ENCODE measurements at regions of chr15 and their contacts with region 1.

Region 1: DNA sequence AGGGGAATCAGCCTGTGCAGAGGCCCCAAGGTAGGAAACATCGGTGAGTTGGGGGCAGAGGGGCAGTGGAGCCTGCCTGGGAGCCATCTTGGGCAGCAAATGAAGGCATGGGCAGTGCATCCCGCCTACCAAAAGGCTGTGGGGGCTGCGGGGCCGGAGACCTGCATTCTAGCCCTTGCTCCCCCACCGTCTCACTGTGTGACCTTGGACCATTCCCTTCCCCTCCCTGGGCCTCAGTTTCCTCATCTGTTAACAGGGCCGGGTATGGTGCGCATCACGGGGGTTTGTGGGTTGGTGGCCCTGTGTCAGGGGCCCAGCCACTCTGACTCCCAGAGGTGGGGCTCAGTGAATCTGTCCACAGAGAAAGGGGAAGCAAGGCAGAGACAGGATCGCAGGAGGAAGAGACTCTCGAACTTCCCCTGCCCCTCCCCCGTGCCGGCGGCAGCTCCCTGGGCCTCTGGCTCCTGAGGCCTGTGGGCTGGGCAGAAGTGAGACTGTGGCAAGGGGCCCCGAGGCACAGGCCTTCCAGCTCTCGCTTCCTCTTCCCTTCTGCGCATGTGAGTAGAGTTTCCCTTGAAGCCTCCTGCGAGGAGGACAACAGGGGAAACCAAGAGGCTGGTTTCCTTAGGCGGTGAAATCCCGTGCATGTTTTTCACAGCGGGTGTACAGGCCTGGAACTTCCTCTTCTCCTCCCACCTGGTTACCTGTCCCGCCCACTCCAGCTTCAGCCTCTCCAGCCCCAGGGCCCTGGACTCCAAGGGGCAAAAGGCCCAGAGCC is 42.9 kb downstream of the IDH2 start:
- DNase-seq: peak; percentile 35 to 92 (median 57)
- ATAC-seq: peak; percentile 67
- H3K4me3 ChIP-seq: no peak overlapping the region
- H3K4me3 Mint-ChIP-seq: peak overlapping the region; percentile 67
- H3K27ac ChIP-seq: peak overlapping the region; percentile 81
- H3K27ac Mint-ChIP-seq: peak overlapping the region; percentile 97
- H3K4me1 ChIP-seq: peaks cover 63% of the 10 kb centered on the region
- H3K4me1 Mint-ChIP-seq: peaks cover 63% of the 10 kb centered on the region
- H3K27me3 ChIP-seq: no peaks in the 10 kb centered on the region
- H3K27me3 Mint-ChIP-seq: no peaks in the 10 kb centered on the region
- CTCF ChIP-seq: no peak

Region 2: GRCh38 chr15:90035095-90035827 is 24.1 kb before region 1 on chr15:
- CTCF ChIA-PET with region 1: no interaction called
- POLR2A ChIA-PET with region 1: interaction called, 12 read pairs
- intact Hi-C with region 1: no loop called
- DNase-seq: peak in 3 of 14 experiments; percentile 31 to 55 (median 37)
- ATAC-seq: no peak
- H3K4me3 ChIP-seq: peak overlapping the region; percentile 25
- H3K4me3 Mint-ChIP-seq: peak overlapping the region; percentile 20
- H3K27ac ChIP-seq: peak overlapping the region; percentile 37 to 59
- H3K27ac Mint-ChIP-seq: peak overlapping the region; percentile 82
- H3K4me1 ChIP-seq: peaks cover 78% of the 10 kb centered on the region
- H3K4me1 Mint-ChIP-seq: peaks cover 76% of the 10 kb centered on the region
- H3K27me3 ChIP-seq: no peaks in the 10 kb centered on the region
- H3K27me3 Mint-ChIP-seq: no peaks in the 10 kb centered on the region
- CTCF ChIP-seq: no peak

Measured in CD4-positive, alpha-beta T cell (primary cell).